Activated naive CD4-positive, alpha-beta T cell treated with anti-CD3 and anti-CD28 coated beads for 36 hours (primary cell): ENCODE measurements at regions of chr16 and their contacts with region 1.

Region 1: GRCh38 chr16:22374311-22375116 is at the start of gene CDR2:
- DNase-seq: peak; percentile 99
- H3K4me3 Mint-ChIP-seq: peak within 1 kb of the TSS; percentile 92
- H3K27ac Mint-ChIP-seq: peak within 1 kb of the TSS; percentile 89
- H3K4me1 Mint-ChIP-seq: peaks cover 37% of the 10 kb centered on the region
- H3K27me3 Mint-ChIP-seq: no peaks in the 10 kb centered on the region
- total RNA-seq, gene CDR2: 42.5 to 42.8 TPM

Region 2: GRCh38 chr16:20781697-20782096 is 1592.8 kb before region 1 on chr16:
- CTCF ChIA-PET with region 1: no interaction called
- intact Hi-C with region 1: no loop called
- DNase-seq: no peak
- H3K4me3 Mint-ChIP-seq: no peak overlapping the region
- H3K27ac Mint-ChIP-seq: no peak overlapping the region
- H3K4me1 Mint-ChIP-seq: no peaks in the 10 kb centered on the region
- H3K27me3 Mint-ChIP-seq: no peaks in the 10 kb centered on the region

Region 3: DNA sequence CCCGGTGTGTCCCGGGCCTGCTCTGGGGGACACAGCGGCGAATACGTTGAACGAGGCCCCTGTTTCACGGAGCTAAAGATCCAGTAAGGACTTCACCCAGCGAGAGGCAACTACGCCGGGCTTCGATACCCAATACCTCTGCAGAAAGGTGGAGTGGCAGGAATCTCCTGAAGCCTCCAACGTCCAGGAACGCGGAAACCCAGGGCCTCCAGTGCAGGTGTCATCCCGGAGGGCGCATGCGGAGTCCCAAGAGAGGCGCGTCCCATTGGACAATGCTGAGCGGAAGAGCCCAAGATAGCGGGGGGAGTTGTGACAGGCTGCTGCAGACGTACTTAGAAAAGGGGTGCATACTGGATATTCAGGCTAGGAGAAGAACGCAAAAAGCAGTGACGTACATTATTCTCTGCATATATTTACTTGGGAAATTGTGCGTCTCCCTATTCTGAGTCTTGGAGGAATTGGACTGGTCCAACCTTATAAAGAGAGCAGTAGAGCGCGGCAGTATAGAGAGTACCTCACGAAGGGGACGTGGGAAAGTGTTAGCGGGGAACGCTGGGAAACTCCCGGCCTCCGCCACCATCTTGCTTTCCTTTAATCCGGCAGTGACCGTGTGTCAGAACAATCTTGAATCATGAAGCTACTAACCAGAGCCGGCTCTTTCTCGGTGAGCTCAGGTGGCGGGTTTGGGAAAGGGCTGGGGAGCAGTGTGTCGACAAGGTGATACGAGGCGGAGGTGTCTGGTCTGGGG is 421.5 kb before region 1 on chr16 and contains the start of gene UQCRC2:
- CTCF ChIA-PET with region 1: no interaction called
- intact Hi-C with region 1: loop called (anchors 5 kb)
- DNase-seq: peak; percentile 93
- H3K4me3 Mint-ChIP-seq: peak within 1 kb of the TSS; percentile 95
- H3K27ac Mint-ChIP-seq: peak within 1 kb of the TSS; percentile 97
- H3K4me1 Mint-ChIP-seq: peaks cover 56% of the 10 kb centered on the region
- H3K27me3 Mint-ChIP-seq: no peaks in the 10 kb centered on the region
- total RNA-seq, gene UQCRC2: 356 to 378 TPM

Region 4: DNA sequence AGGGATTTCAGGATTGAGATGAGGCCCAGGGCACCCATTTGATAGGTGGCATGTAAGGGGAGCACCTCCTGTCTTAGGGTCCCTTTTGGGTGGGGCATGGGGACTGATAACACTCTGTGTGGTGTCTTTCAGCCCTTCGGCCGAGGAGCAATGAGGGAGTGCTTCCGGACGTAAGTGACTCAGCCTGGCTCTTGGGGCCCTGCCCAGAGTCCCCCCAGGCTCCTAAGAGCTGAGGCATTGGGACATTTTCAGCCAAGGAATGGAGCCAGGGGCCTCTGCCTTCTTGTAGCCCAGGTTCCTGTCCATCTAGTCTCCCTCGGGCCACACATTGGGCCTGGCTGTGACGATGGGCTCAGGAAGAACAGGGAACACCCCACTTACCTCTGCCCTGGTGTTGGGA is 124.0 kb before region 1 on chr16:
- CTCF ChIA-PET with region 1: no interaction called
- intact Hi-C with region 1: no loop called
- DNase-seq: no peak
- H3K4me3 Mint-ChIP-seq: no peak overlapping the region
- H3K27ac Mint-ChIP-seq: no peak overlapping the region
- H3K4me1 Mint-ChIP-seq: peaks cover 2% of the 10 kb centered on the region
- H3K27me3 Mint-ChIP-seq: no peaks in the 10 kb centered on the region

Region 5: DNA sequence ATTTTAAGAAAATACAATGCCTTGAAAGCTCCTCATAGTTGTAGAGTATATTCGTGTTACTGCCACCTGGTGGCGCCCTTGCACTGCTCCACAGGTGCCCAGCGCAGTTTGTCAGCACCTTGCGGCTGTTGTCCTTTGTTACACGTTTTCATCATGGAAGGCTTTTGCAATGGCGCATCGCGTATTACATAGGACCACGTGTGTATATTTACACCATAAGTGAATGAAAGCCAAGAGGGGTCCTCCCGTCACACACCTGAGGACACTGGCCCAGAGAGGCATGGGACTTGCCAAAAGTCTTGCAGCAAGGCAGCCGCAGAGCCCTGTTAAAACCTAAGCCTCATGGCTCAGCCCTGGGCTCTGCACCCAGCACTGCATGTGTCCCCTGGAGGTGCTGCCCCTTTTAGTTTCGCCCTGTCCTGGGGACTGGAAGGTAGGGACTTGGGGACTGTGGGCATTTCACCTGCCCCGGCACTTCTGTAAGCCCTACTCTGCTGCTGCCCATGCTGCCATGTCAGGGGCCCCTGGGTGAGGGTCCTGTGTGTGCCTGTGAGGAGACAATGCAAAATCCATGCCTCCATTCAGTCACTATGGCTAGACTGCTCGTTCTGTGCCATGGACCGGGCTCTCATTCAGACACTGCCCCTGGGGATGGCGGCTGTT is 53.0 kb before region 1 on chr16:
- CTCF ChIA-PET with region 1: interaction called, 3 read pairs
- intact Hi-C with region 1: loop called (anchors 1 kb)
- DNase-seq: peak; percentile 83
- H3K4me3 Mint-ChIP-seq: no peak overlapping the region
- H3K27ac Mint-ChIP-seq: peak overlapping the region; percentile 75
- H3K4me1 Mint-ChIP-seq: no peaks in the 10 kb centered on the region
- H3K27me3 Mint-ChIP-seq: no peaks in the 10 kb centered on the region

Region 6: GRCh38 chr16:22335668-22336246 is 38.8 kb before region 1 on chr16:
- CTCF ChIA-PET with region 1: no interaction called
- intact Hi-C with region 1: loop called (anchors 5 kb)
- DNase-seq: no peak
- H3K4me3 Mint-ChIP-seq: no peak overlapping the region
- H3K27ac Mint-ChIP-seq: no peak overlapping the region
- H3K4me1 Mint-ChIP-seq: peaks cover 11% of the 10 kb centered on the region
- H3K27me3 Mint-ChIP-seq: no peaks in the 10 kb centered on the region

Region 7: GRCh38 chr16:22353191-22353919 is 21.2 kb before region 1 on chr16:
- CTCF ChIA-PET with region 1: interaction called, 5 read pairs
- intact Hi-C with region 1: loop called (anchors 1 kb)
- DNase-seq: peak; percentile 55
- H3K4me3 Mint-ChIP-seq: peak overlapping the region; percentile 18
- H3K27ac Mint-ChIP-seq: peak overlapping the region; percentile 96
- H3K4me1 Mint-ChIP-seq: peaks cover 55% of the 10 kb centered on the region
- H3K27me3 Mint-ChIP-seq: no peaks in the 10 kb centered on the region

Region 8: GRCh38 chr16:23013481-23013880 is 639.0 kb after region 1 on chr16:
- CTCF ChIA-PET with region 1: no interaction called
- intact Hi-C with region 1: no loop called
- DNase-seq: no peak
- H3K4me3 Mint-ChIP-seq: no peak overlapping the region
- H3K27ac Mint-ChIP-seq: no peak overlapping the region
- H3K4me1 Mint-ChIP-seq: peaks cover 3% of the 10 kb centered on the region
- H3K27me3 Mint-ChIP-seq: peaks cover 6% of the 10 kb centered on the region